ENCODE measurements at regions of chr5 and their contacts with region 1.

Region 1: DNA sequence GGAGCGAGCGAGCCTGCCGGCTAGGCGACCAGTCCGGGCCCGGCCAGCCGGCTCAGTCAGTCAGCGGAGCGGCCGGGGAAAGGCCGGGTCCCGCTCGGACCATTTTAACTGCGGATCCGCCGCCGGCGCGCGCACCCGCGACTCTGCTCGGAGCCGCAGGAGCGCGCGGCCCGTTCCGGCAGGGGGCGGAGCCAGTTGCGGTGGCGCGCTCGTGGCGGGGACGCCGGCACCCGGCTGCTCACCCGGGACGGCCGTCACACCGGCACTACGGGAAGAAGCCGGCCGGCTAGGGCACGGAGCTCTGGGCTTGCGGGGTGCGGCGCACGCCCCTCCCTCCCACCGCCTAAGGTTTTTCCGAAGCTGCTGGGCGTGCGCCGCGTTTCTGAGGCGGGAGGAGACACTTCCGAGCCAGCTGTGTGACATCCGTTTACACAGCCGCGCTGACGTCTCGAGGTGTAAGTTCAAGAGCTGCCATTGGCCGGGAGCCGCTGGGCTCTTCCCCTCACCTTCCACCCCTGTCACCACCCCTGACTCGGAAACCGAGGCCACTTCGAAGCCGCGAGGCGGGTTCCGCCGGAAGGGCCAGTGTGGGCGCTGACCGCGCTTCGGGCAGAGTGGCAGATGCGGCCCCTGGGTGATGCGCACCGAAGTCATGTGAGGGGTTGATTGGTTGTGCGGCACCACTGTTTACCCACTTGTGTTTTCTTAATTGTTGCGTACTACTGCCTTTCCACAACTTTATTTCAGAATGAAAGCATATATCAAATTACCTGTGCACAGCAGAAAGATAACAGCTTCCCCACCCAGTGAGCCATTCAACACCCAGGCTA is at the start of gene FBXL17:
- DNase-seq: peak; percentile 95
- H3K4me3 Mint-ChIP-seq: peak within 1 kb of the TSS; percentile 82
- H3K27ac Mint-ChIP-seq: peak within 1 kb of the TSS; percentile 95
- H3K4me1 Mint-ChIP-seq: peaks cover 36% of the 10 kb centered on the region
- H3K27me3 Mint-ChIP-seq: no peaks in the 10 kb centered on the region
- total RNA-seq, gene FBXL17: 3.5 to 4.3 TPM

Region 2: DNA sequence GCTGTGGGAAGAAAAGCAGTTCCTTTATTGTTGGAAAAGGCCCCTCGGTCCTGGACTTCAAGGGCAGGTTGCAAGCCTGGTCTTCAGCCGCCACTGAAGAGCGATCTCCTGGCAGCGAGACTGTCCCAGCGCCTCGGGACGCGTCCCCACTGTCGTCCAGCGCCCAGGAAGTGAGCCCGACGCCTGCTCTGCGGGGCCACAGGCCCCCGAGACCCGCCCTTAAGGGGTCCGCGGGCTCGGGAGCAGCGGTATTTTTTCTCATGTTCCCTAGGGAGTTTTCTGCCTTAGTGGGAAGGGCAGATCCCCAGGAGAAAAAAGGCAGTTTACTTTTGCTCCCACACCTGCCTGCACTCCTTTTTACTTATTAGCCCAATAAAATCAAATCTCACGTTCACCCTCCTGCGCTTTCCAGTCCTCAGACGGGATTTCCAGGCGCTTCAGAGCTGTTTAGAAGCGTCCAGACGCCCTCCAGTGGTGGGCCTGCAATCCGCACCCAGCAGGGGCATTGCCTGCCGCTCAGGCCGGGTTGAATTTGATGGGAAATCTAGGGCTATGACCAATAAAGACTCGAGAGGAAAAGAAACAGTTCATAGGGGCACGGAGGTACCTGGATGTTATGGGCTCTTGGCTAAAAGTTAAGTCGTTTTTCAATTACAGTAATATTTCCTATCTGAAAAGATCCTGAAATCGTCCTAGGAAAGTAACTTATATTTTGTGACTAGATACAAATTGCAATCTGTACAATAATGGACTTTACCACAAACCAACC is 708.6 kb before region 1 on chr5:
- CTCF ChIA-PET with region 1: no interaction called
- intact Hi-C with region 1: loop called (anchors 5 kb)
- DNase-seq: peak; percentile 88
- H3K4me3 Mint-ChIP-seq: peak overlapping the region; percentile 71
- H3K27ac Mint-ChIP-seq: no peak overlapping the region
- H3K4me1 Mint-ChIP-seq: peaks cover 29% of the 10 kb centered on the region
- H3K27me3 Mint-ChIP-seq: peaks cover 58% of the 10 kb centered on the region

Region 3: GRCh38 chr5:108260117-108260857 is 121.9 kb before region 1 on chr5:
- CTCF ChIA-PET with region 1: interaction called, 3 read pairs
- intact Hi-C with region 1: loop called (anchors 1 kb)
- DNase-seq: peak; percentile 83
- H3K4me3 Mint-ChIP-seq: peak overlapping the region; percentile 48
- H3K27ac Mint-ChIP-seq: no peak overlapping the region
- H3K4me1 Mint-ChIP-seq: peaks cover 9% of the 10 kb centered on the region
- H3K27me3 Mint-ChIP-seq: no peaks in the 10 kb centered on the region

Region 4: GRCh38 chr5:108367679-108368334 is 14.4 kb before region 1 on chr5:
- CTCF ChIA-PET with region 1: no interaction called
- intact Hi-C with region 1: loop called (anchors 1 kb)
- DNase-seq: no peak
- H3K4me3 Mint-ChIP-seq: no peak overlapping the region
- H3K27ac Mint-ChIP-seq: no peak overlapping the region
- H3K4me1 Mint-ChIP-seq: peaks cover 30% of the 10 kb centered on the region
- H3K27me3 Mint-ChIP-seq: no peaks in the 10 kb centered on the region

Region 5: GRCh38 chr5:109191153-109191558 is 809.0 kb after region 1 on chr5:
- CTCF ChIA-PET with region 1: no interaction called
- intact Hi-C with region 1: no loop called
- DNase-seq: no peak
- H3K4me3 Mint-ChIP-seq: no peak overlapping the region
- H3K27ac Mint-ChIP-seq: no peak overlapping the region
- H3K4me1 Mint-ChIP-seq: peaks cover 3% of the 10 kb centered on the region
- H3K27me3 Mint-ChIP-seq: no peaks in the 10 kb centered on the region

Region 6: DNA sequence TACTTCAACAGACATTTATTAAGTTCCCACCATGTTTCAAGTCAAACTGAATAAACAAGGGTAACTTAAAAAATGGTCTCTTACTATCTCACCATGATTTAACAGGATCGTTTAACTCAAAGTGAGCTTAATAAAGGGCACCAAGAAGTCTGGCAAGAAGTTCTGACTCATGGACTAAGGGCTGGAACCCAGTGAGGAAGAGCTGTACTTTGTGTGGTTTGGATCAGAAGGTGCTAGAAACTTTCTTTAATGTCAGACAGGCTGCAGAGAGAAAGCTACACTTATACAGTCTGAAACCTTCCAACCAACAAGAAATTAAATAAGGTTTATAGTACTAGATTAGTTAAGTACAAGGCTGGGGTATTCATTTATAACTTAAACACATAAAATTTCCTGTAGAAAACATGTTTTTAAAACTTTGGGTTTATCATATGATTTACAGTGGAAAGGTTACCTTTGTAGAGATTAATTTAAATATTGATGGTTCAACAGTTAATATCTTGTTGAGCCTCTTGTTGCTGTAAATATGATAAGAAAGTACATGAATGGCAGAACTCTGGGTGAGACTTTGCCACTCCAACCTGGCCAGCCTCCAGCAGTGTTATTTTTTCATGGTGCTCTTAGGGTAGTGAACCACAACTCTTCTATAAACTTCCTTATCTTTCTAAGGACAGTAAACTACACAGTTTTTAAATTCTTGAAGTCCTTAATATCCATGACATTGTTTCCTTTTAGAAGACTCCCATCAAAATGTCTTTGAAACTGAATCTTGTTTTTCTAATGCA is 1470.4 kb after region 1 on chr5:
- CTCF ChIA-PET with region 1: no interaction called
- intact Hi-C with region 1: loop called (anchors 5 kb)
- DNase-seq: peak; percentile 30
- H3K4me3 Mint-ChIP-seq: no peak overlapping the region
- H3K27ac Mint-ChIP-seq: peak overlapping the region; percentile 54
- H3K4me1 Mint-ChIP-seq: peaks cover 75% of the 10 kb centered on the region
- H3K27me3 Mint-ChIP-seq: no peaks in the 10 kb centered on the region

Measured in activated naive CD4-positive, alpha-beta T cell treated with anti-CD3 and anti-CD28 coated beads for 36 hours (primary cell).